ENCODE measurements at regions of chr3 and their contacts with region 1.

Region 1: DNA sequence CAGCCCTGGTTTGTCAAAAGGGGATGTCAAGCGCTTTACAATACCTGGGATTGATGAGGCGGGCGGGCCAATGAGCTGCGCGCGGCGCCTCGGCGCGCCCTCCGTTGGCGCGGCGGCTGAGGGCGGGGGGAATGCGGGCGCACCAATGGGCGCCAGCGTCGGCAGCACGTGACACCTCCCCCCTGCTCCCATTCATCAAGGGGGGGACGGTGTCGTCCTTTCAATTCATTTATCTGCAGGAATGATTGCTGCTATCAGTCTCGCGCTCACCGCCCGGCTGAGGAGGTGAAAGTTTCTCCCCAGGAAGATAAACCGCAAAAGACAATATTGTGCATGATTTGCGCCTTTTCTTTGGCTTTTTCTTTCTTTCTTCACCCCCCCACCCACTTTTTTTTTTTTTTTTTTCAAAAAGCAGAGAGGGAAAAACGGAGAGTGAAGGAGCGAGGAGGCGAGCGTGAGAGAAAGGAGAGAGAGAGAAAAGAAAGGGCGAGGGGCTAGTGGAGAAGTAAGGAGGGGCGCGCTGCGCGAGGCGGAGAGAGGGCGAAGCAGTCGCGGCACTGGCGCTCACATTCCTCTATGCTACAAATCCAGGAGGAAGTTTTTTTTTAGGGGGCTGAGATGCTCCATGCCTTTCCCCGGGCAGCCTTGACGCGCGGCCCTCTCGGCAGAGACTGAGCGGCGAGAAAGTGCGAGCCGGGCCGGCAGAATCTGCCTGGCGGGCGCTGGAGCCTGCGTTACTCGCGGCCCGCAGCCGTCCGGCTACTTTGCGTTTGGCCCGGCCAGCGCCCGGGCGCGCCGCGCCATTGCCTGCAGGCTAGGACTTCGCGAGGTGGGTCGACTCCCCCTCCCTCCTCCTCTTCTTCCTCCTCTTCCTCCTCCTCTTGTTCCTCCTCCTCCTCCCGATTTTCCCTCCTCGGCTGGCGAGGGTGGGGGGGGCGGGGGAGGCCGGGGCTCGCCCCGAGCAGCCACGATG is at the start of gene ZIC1:
- H3K4me3 ChIP-seq: peak within 1 kb of the TSS; percentile 31
- H3K27ac ChIP-seq: no peak within 1 kb of the TSS
- H3K4me1 ChIP-seq: no peaks in the 10 kb centered on the region
- CTCF ChIP-seq: no peak

Region 2: DNA sequence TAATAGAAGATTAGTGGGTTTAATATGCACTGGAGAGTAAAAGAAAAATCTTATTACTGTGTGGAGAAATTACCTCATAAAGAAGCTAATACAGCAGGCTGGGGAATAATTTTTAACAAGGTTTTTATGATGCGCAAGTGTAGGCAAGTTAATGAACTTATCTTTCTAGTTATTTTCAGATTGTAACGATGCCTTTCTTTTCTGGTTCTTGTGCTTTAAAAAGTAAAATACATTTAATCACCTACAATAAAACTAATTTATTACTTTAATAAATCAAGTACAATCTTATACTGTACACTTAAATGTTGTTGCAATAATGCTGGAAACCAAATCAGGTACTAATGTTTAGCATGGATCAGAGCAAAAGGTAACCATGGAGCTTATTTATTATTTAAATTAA is 266.3 kb after region 1 on chr3:
- CTCF ChIA-PET with region 1: no interaction called
- POLR2A ChIA-PET with region 1: interaction called, 14 read pairs
- H3K4me3 ChIP-seq: no peak overlapping the region
- H3K27ac ChIP-seq: no peak overlapping the region
- H3K4me1 ChIP-seq: no peaks in the 10 kb centered on the region
- CTCF ChIP-seq: no peak

Measured in HEK293 (cell line).